ENCODE measurements at regions of chr11 and their contacts with region 1.

Region 1: GRCh38 chr11:95150946-95151684 is 61.5 kb downstream of the ENDOD1 start:
- DNase-seq: peak; percentile 95

Region 2: DNA sequence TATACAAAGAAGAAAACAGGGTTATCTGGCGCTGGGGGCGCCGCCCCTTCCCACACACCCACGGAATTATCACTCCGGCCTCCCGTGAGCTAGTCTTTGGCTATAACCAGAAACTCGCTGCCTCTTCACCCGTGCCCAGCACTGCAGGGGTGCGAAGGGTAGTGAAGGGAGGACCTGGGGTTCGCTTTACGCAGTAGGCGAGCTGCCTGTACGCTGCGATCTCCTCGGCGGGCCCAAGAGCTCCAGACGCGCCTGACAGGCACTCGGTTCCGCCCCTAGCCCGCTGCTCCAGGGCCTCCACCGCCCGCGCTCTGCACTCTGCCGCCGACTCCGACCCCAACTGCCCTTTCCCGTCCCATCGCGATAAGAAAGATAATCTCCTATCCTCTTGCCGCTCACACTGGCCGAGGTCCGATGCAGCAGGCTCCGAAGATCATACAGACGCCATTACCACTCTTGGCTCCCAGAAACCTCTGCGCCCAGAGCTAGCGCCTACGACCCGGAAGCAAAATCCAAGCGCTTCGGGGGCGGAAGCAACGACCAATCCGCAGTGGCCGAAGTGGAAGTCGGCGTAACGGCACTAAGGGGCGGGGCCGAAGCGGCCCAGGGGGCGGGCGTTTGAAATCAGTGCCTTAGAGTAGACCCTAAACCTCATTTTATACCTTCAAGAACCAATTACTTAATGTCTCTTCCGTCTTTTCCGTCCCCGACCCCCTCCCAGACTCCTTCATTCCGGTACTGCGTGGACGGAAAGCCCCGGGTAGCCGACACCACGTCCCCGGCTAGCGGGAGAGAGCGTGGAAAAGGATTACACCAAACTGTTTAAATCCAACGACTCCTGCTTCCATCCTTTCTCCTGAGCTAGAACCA is 177.8 kb before region 1 on chr11 and contains the starts of genes CWC15 and KDM4D:
- intact Hi-C with region 1: loop called (anchors 10 kb)
- DNase-seq: peak; percentile 98
- total RNA-seq, gene CWC15: 57.8 TPM
- total RNA-seq, gene KDM4D: 0.83 TPM

Region 3: DNA sequence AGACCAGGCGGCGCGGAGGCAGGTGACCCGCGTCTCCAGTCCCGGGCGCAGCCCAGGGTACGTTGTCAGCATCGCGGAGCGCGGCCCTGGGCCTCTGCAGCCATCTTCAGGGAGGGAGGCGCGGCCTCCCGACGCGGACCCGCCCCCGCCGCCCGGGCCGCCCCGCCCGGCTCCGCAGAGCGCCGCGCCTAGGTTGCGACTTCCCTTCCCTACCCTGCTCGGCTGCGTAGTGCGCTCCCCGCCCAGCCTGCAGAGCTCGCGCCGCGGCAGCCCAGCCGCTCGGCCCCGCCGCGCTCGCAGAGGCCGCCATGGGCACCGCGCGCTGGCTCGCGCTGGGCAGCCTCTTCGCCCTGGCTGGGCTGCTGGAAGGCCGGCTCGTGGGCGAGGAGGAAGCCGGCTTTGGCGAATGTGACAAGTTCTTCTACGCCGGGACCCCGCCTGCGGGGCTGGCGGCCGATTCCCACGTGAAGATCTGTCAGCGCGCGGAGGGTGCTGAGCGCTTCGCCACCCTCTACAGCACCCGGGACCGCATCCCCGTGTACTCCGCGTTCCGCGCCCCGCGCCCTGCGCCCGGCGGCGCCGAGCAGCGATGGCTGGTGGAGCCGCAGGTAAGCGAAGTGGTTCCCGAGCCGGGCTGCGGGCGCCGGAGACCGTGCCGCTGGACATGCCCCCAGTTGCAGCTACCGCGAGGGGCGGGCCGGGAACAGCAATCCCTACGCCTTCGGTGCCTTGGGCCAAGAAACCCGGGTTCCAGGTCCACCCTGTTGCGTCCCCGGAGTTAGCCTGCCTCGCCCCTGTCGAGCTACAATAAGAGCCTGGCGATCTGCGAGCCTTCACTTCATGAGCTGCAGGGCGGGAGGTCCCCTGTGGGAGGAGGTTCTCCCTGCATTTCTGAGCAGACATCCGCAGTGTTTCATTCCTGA is 61.2 kb before region 1 on chr11 and contains the start of gene ENDOD1:
- intact Hi-C with region 1: loop called (anchors 5 kb)
- DNase-seq: peak; percentile 92
- total RNA-seq, gene ENDOD1: 13.3 TPM

Region 4: DNA sequence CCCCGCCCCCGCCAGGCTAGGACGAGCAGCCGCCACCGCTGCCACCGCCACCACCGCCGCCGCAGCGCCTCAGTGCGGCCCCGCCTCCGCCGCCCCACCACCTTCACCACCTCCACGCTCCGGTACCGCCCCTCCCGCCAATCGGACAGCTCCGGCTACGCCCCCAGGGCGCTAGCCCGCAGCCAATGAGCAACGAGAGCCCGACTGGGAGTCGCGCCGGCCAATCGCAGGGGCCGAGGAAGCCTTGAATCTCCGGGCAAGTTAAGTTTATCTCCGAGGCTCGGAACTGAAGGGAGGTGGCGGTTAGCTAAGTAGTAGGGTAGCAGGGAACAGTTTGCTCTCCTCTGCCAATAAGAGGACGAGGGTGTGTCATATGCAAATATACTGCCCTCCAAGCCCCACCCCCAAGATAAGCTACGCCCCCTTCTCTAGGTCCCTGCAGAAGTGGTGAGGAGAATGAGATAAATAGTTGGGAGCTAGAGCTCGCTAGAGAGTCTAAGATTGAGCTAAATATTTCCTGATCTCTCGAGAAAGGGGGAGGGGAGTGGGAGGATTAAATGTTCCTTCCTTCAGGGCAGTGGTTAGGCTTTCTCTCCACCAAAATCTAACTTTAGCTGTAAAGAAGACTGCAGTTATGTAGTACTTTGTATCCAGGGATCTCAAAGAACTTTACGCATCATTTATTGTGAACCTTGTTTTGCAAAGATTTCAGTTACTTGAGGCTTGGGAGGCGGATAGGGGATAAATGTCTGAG is 80.2 kb after region 1 on chr11 and contains the start of gene SESN3:
- intact Hi-C with region 1: loop called (anchors 5 kb)
- DNase-seq: peak; percentile 100
- total RNA-seq, gene SESN3: 10.6 TPM

Region 5: DNA sequence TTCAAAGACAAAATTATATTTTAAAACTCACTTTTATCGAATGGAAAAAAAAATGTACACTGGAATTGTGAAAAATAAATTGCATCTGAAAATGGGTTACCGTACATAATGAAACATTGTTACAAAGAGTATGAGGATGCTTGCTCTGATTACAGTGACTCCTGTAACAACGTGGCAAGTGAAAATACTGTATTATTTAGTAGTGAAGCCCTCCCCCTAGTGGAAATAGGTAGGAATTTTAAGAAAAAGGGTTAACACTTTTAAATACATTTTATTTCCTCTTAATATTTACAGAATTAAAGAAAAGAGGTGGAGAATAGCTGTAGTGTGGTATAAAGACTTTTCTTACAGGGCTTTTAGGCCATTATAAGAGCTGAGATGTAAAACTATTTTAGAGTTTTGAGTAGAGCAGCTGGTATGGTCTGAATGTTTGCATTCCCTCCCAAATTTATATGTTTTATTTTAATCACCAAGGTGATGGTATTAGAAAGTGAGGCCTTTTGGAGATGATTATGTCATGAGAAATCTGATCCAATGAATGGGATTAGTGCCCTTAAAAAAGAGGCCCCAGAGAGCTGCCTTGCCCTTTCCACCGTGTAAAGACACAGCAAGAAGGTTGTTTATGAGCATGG is 613.3 kb after region 1 on chr11:
- intact Hi-C with region 1: loop called (anchors 2 kb)
- DNase-seq: no peak

Measured in cardiac septum (tissue), 1 donor.